Activated CD4-positive, alpha-beta T cell treated with anti-CD3 and anti-CD28 coated beads for 36 hours (primary cell): ENCODE measurements at regions of chr11 and their contacts with region 1.

Region 1: GRCh38 chr11:64269380-64270234 is 14.9 kb downstream of the BAD start:
- DNase-seq: peak; percentile 98
- ATAC-seq: peak; percentile 82
- H3K4me3 Mint-ChIP-seq: peak overlapping the region; percentile 98
- H3K27ac Mint-ChIP-seq: peak overlapping the region; percentile 96
- H3K4me1 Mint-ChIP-seq: peaks cover 19% of the 10 kb centered on the region
- H3K27me3 Mint-ChIP-seq: no peaks in the 10 kb centered on the region

Region 2: GRCh38 chr11:63974259-63975143 is 295.1 kb before region 1 on chr11 and contains the start of gene COX8A:
- CTCF ChIA-PET with region 1: no interaction called
- POLR2A ChIA-PET with region 1: no interaction called
- intact Hi-C with region 1: loop called in 1 of 2 experiments (anchors 1 kb)
- DNase-seq: peak; percentile 97
- ATAC-seq: peak; percentile 100
- H3K4me3 Mint-ChIP-seq: peak within 1 kb of the TSS; percentile 95
- H3K27ac Mint-ChIP-seq: peak within 1 kb of the TSS; percentile 97
- H3K4me1 Mint-ChIP-seq: peaks cover 20% of the 10 kb centered on the region
- H3K27me3 Mint-ChIP-seq: no peaks in the 10 kb centered on the region
- total RNA-seq, gene COX8A: 413 to 454 TPM

Region 3: DNA sequence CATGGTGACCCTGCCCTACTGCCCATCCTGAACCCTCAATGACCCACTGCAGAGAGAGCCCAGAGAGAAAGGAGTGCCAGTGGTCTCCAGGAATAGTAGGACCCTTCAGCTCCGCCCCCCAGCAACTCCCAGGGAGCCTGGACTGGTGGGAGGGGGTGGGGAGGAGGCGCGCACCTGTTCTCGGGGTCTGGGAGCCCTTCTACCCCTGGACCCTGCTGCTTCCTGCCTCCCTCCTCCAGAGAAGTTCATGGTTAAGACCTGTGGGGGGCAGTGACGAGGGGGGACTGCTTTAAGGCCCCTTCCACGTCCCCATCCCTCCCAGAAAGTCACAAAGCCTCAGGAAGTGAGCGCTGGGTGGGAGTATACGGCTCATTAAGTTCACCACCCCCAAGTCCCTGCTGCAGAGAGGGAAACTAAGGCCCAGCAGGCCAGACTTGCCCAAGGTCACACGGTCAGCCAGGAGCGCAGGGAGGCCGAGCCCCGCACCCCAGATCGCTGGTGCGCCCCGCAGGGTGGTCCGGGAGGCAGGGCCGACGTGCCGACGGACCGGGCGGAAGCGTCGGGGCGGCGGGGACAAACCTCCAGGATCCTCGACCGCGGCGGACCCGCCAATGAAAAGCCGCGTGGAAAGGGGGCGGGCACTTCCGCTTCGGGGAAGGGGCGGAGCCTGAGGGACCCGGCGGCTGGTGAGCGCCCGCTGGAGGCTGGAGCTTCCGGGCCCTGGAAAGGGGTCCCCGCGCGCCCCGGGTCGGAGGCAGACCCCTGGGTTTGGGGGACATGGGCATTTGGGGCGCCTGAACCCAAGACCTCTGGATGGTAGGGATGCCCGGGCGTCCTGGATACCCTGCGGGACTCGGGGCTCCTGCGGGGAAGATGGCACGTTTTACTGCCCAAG is 43.7 kb before region 1 on chr11 and contains the starts of genes NUDT22 and TRPT1:
- CTCF ChIA-PET with region 1: interaction called, 3 read pairs
- POLR2A ChIA-PET with region 1: interaction called, 3 read pairs
- intact Hi-C with region 1: loop called (anchors 1 kb)
- DNase-seq: peak; percentile 96
- ATAC-seq: peak; percentile 72
- H3K4me3 Mint-ChIP-seq: peak within 1 kb of the TSS; percentile 87
- H3K27ac Mint-ChIP-seq: peak within 1 kb of the TSS; percentile 85
- H3K4me1 Mint-ChIP-seq: peaks cover 32% of the 10 kb centered on the region
- H3K27me3 Mint-ChIP-seq: no peaks in the 10 kb centered on the region
- total RNA-seq, gene NUDT22: 61.8 to 74.1 TPM
- total RNA-seq, gene TRPT1: 23.9 to 27.1 TPM

Region 4: GRCh38 chr11:64240394-64241174 is 29.0 kb before region 1 on chr11 and contains the start of gene FKBP2:
- CTCF ChIA-PET with region 1: interaction called, 12 read pairs
- POLR2A ChIA-PET with region 1: interaction called, 10 read pairs
- intact Hi-C with region 1: loop called in 1 of 2 experiments (anchors 1 kb)
- DNase-seq: peak; percentile 99
- ATAC-seq: peak; percentile 68
- H3K4me3 Mint-ChIP-seq: peak within 1 kb of the TSS; percentile 86
- H3K27ac Mint-ChIP-seq: peak within 1 kb of the TSS; percentile 99
- H3K4me1 Mint-ChIP-seq: peaks cover 31% of the 10 kb centered on the region
- H3K27me3 Mint-ChIP-seq: no peaks in the 10 kb centered on the region
- total RNA-seq, gene FKBP2: 19.9 to 21.3 TPM

Region 5: DNA sequence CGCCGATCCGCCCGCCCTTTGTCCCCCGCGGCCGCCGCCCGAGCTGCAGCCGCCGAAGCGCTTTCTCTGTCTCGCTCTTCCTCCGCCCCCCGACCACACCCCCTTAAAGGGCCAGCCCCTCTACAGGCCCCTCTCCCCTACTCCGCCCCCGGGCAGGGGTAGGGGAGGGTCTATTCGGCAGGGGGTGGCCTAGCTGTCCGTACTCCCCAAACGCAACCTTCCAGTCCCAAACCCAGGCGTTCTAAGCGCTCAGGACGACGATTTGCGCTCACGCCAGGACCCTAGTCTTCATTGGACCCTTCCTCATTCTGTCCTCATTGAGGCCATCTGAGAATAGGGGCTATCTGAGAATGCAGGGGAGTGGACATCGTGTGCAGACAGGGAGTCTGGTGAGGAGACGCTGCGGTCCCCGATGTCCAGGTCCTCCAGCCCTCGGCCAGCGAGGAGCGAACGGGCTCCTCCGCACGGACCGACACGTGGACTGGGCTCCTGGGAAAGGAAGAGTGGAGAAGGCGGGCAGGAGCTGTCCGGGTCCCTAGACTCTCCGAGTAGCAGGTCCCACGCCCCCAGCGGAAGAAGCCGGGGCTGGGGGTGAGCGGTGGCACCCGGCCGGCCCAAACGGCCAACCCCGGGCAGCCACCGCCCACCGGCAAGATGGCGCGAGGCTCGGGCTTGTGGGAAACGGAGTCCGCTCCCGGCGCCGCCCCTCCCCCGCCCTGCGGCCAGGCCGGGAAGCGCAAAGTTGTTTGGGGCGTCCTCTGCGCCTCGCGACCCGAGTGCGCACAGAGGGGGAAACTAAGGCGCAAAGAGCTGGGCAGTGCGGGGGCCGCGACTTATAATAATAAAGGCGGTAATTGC is 22.5 kb before region 1 on chr11 and contains the start of gene PPP1R14B:
- CTCF ChIA-PET with region 1: interaction called, 20 read pairs
- POLR2A ChIA-PET with region 1: interaction called, 9 read pairs
- intact Hi-C with region 1: loop called (anchors 1 kb)
- DNase-seq: peak; percentile 89
- ATAC-seq: peak; percentile 54
- H3K4me3 Mint-ChIP-seq: peak within 1 kb of the TSS; percentile 94
- H3K27ac Mint-ChIP-seq: peak within 1 kb of the TSS; percentile 92
- H3K4me1 Mint-ChIP-seq: peaks cover 34% of the 10 kb centered on the region
- H3K27me3 Mint-ChIP-seq: no peaks in the 10 kb centered on the region
- total RNA-seq, gene PPP1R14B: 261 to 267 TPM

Region 6: DNA sequence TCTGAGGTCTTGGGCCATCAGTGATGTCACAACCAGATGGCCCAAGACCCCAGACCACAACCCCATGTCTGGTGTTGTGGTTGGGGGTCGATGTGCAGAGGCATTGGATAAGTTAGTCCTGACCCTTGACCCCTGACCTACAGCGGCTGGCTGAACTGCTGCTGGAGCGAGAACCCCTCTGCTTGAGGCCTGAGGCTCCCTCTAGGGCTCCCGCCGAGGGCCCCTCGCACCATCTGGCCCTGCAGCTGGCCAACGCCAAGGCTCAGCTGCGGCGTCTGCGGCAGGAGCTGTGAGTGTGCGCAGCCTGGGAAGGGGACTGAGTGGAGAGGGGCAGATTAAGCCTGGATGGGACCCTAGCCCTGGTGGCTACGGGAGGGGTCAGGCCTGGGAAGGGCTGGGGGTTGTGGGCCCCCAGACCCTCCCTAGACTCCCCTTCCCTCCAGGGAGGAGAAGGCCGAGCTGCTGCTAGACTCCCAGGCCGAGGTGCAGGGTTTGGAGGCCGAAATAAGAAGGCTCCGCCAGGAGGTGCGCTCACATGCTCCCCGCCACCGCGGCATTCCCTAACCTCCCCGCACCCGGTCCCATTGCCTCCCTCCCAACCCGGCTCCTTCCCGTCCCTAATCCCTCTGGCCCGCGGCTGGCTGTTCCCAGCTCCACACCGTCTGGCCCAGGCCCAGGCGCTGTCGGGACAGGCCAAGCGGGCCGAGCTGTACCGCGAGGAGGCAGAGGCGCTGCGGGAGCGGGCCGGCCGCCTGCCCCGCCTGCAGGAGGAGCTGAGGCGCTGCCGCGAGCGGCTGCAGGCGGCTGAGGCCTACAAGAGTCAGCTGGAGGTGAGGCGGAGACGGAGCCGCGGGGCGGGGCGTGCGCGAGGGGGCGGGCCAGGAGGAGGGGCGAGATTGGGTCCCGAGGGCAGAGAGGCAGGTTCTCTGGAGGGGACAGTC is 72.5 kb after region 1 on chr11:
- CTCF ChIA-PET with region 1: no interaction called
- POLR2A ChIA-PET with region 1: no interaction called
- intact Hi-C with region 1: loop called in 1 of 2 experiments (anchors 1 kb)
- DNase-seq: peak; percentile 96
- ATAC-seq: peak; percentile 77
- H3K4me3 Mint-ChIP-seq: no peak overlapping the region
- H3K27ac Mint-ChIP-seq: no peak overlapping the region
- H3K4me1 Mint-ChIP-seq: peaks cover 28% of the 10 kb centered on the region
- H3K27me3 Mint-ChIP-seq: no peaks in the 10 kb centered on the region